Endothelial cell of umbilical vein (primary cell): ENCODE measurements at regions of chr2 and their contacts with region 1.

Region 1: GRCh38 chr2:47205576-47206141 is 50.6 kb upstream of the STPG4 start:
- DNase-seq: peak; percentile 18
- H3K4me3 ChIP-seq: no peak overlapping the region
- H3K27ac ChIP-seq: no peak overlapping the region
- H3K4me1 ChIP-seq: peaks cover 11% of the 10 kb centered on the region
- H3K27me3 ChIP-seq: no peaks in the 10 kb centered on the region
- CTCF ChIP-seq: no peak
- POLR2A ChIP-seq: no peak

Region 2: GRCh38 chr2:47195149-47195548 is 10.5 kb before region 1 on chr2:
- CTCF ChIA-PET with region 1: interaction called, 12 read pairs
- POLR2A ChIA-PET with region 1: no interaction called
- dilution Hi-C with region 1: no loop called
- intact Hi-C with region 1: no loop called
- DNase-seq: peak; percentile 79
- H3K4me3 ChIP-seq: no peak overlapping the region
- H3K27ac ChIP-seq: no peak overlapping the region
- H3K4me1 ChIP-seq: peaks cover 34% of the 10 kb centered on the region
- H3K27me3 ChIP-seq: no peaks in the 10 kb centered on the region
- CTCF ChIP-seq: no peak
- POLR2A ChIP-seq: no peak

Region 3: DNA sequence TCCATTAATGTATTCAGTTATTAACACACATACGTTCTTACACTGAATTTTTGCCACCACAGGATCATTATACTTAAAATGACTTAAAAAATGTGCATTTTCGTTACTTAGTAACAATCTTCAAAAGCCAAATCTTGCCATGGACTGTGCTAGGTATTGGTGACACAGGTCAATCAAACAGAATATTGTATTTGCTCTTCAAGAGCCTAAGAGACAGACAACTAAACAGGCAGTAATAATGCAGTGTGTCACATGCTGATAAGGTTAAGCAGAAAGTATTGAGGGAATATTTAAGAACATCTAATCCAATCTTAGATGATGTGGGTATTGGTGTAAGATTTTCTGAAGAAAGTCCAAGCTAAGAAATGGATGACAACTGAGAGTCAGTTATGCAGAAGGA is 643.7 kb after region 1 on chr2:
- CTCF ChIA-PET with region 1: no interaction called
- POLR2A ChIA-PET with region 1: no interaction called
- dilution Hi-C with region 1: no loop called
- intact Hi-C with region 1: no loop called
- DNase-seq: no peak
- H3K4me3 ChIP-seq: no peak overlapping the region
- H3K27ac ChIP-seq: no peak overlapping the region
- H3K4me1 ChIP-seq: no peaks in the 10 kb centered on the region
- H3K27me3 ChIP-seq: no peaks in the 10 kb centered on the region
- CTCF ChIP-seq: no peak
- POLR2A ChIP-seq: no peak